GM12878 (cell line): ENCODE measurements at regions of chr1 and their contacts with region 1.

Region 1: DNA sequence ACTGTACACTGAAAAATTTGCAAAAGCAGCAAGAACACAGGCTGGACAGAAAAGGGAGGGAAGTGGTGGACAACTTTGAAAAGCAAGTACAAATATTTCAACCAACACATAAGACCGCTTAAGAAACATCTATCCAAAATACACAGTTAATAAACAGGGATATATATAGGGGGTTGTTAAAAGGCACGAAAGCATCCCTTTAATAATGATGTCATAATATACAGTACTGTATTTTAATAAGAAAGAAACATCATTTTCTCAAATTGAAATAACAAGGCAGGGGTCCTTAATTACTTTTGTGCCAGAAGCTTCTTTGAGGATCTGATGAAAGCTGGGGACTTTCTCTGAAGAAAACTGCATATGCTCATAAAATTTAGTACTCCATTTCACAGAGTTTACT is 77.1 kb upstream of the ESRRG start:
- DNase-seq: no peak
- ATAC-seq: no peak
- H3K4me3 ChIP-seq: no peak overlapping the region
- H3K27ac ChIP-seq: no peak overlapping the region
- H3K4me1 ChIP-seq: no peaks in the 10 kb centered on the region
- H3K27me3 ChIP-seq: no peaks in the 10 kb centered on the region; a peak in 1 of 4 replicates
- CTCF ChIP-seq: no peak
- EP300 ChIP-seq: no peak
- POLR2A ChIP-seq: no peak
- RAD21 ChIP-seq: no peak

Region 2: GRCh38 chr1:216758161-216758560 is 42.2 kb before region 1 on chr1:
- CTCF ChIA-PET with region 1: no interaction called
- POLR2A ChIA-PET with region 1: no interaction called
- RAD21 ChIA-PET with region 1: no interaction called
- SMC1A ChIA-PET with region 1: no interaction called
- in situ Hi-C with region 1: no loop called
- intact Hi-C with region 1: loop called (anchors 1 kb)
- DNase-seq: no peak
- ATAC-seq: no peak
- H3K4me3 ChIP-seq: no peak overlapping the region
- H3K27ac ChIP-seq: no peak overlapping the region
- H3K4me1 ChIP-seq: no peaks in the 10 kb centered on the region
- H3K27me3 ChIP-seq: no peaks in the 10 kb centered on the region
- CTCF ChIP-seq: no peak
- EP300 ChIP-seq: no peak
- POLR2A ChIP-seq: no peak
- RAD21 ChIP-seq: no peak

Region 3: DNA sequence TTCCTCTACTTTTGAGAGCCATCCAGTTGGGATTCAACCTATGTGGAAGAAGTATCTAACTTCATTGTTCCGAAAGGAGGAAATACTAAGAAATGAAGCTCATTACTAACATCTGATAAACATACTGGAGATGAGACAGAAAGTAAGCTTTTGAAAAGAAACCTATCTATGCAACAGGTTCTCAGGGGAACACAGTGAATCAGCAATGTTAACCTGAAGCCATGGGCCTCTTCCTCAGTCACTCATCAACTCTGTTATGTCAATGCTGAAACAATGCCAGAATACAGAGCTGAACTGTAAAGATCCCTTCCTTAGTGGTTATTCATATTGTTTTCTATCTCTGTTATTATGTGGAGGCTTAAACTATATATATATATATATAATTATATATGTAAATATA is 21.6 kb before region 1 on chr1:
- CTCF ChIA-PET with region 1: no interaction called
- POLR2A ChIA-PET with region 1: no interaction called
- RAD21 ChIA-PET with region 1: no interaction called
- SMC1A ChIA-PET with region 1: no interaction called
- in situ Hi-C with region 1: no loop called
- intact Hi-C with region 1: no loop called
- DNase-seq: no peak
- ATAC-seq: no peak
- H3K4me3 ChIP-seq: no peak overlapping the region
- H3K27ac ChIP-seq: no peak overlapping the region
- H3K4me1 ChIP-seq: no peaks in the 10 kb centered on the region
- H3K27me3 ChIP-seq: no peaks in the 10 kb centered on the region
- CTCF ChIP-seq: no peak
- EP300 ChIP-seq: no peak
- POLR2A ChIP-seq: no peak
- RAD21 ChIP-seq: no peak